ENCODE measurements at regions of chr3 and their contacts with region 1.

Region 1: DNA sequence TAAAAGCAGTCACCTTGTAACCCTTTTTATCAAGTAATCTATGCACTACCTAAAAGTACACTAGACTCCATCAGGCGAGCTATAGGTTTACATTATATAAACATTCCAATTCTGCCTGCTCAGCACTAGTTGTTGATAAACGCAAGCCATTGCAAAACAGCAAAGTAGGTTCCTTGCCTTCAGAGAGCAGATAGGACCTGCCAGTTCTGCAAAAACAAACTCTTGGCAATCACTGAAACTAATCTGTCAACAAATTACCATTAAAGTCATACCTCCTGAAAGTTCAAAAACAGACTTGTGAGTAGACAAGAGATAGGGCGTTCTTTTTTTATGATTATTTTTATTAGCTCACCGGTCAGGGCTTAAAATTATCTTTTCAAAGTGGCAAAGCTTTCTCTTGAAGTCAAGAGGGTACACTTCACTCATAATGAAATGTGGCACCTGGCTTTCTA is 392.5 kb downstream of the FOXP1 start:
- DNase-seq: no peak
- ATAC-seq: no peak
- H3K4me3 ChIP-seq: no peak overlapping the region
- H3K4me3 Mint-ChIP-seq: no peak overlapping the region
- H3K27ac ChIP-seq: no peak overlapping the region
- H3K27ac Mint-ChIP-seq: peak overlapping the region; percentile 25 to 52
- H3K4me1 ChIP-seq: no peaks in the 10 kb centered on the region
- H3K4me1 Mint-ChIP-seq: peaks cover 69 to 86% (median 70%) of the 10 kb centered on the region in 3 donors
- H3K27me3 ChIP-seq: no peaks in the 10 kb centered on the region
- H3K27me3 Mint-ChIP-seq: no peaks in the 10 kb centered on the region

Region 2: GRCh38 chr3:71083726-71084131 is 107.3 kb before region 1 on chr3:
- CTCF ChIA-PET with region 1: no interaction called
- POLR2A ChIA-PET with region 1: no interaction called
- DNase-seq: peak in 2 of 35 experiments; percentile 5 to 52
- ATAC-seq: no peak
- H3K4me3 ChIP-seq: no peak overlapping the region
- H3K4me3 Mint-ChIP-seq: peak overlapping the region in 1 of 3 donors; percentile 6
- H3K27ac ChIP-seq: peak overlapping the region; percentile 30
- H3K27ac Mint-ChIP-seq: peak overlapping the region; percentile 79 to 90
- H3K4me1 ChIP-seq: peaks cover 50 to 57% of the 10 kb centered on the region in 2 experiments
- H3K4me1 Mint-ChIP-seq: peaks cover 87 to 93% (median 89%) of the 10 kb centered on the region in 3 donors
- H3K27me3 ChIP-seq: no peaks in the 10 kb centered on the region
- H3K27me3 Mint-ChIP-seq: no peaks in the 10 kb centered on the region

Region 3: DNA sequence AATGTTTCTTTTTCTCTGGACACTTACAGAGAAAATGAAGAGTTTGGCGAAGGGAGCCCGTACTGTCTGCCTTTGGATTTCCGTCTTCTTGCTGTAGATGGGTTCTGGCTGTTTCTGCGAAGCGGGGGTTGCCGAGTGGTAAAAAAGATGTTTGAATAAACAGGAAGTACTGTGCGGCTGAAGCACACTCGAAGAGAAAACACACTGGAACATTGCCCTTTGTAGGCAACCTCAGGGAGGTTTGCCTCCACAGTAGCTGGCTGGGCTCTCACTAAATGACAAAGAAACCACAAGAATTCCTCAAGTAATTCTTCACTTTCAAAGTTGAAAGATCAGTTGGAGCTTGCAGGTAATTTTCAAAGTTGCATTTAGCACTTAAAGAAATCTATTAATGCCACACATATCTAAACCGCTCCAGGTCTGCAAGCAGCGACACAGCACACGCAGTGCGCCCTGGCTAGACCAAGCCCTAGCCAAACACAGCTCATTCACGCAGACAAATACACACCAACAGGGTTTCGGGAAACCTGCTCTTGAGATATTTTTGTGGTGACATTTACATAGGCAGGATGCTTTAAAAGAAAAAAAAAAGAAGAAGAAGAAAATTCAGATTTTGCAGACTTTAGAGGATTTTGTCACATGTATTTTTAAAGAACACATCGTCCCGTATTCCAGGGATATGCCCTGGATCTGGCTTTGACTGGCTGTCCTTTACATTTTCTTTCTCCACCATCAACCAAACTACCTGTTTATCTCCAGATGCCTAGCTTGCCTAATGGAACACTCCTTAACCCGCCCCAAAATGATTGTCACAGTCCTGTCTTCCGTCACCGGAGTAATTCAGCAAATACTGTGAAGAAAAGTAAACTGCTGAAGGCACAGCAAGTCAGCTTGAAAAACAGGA is 60.3 kb before region 1 on chr3:
- CTCF ChIA-PET with region 1: no interaction called
- POLR2A ChIA-PET with region 1: interaction called in 1 of 2 experiments, 18 read pairs
- DNase-seq: peak; percentile 42 to 89 (median 79)
- ATAC-seq: peak; percentile 82 to 89 (median 85)
- H3K4me3 ChIP-seq: peak overlapping the region; percentile 56 to 73
- H3K4me3 Mint-ChIP-seq: peak overlapping the region; percentile 83 to 91 (median 91)
- H3K27ac ChIP-seq: peak overlapping the region; percentile 86
- H3K27ac Mint-ChIP-seq: peak overlapping the region; percentile 97 to 99
- H3K4me1 ChIP-seq: peaks cover 50 to 63% of the 10 kb centered on the region in 2 experiments
- H3K4me1 Mint-ChIP-seq: peaks cover 79 to 93% (median 80%) of the 10 kb centered on the region in 3 donors
- H3K27me3 ChIP-seq: no peaks in the 10 kb centered on the region
- H3K27me3 Mint-ChIP-seq: no peaks in the 10 kb centered on the region

Region 4: GRCh38 chr3:71168081-71168770 is 22.8 kb before region 1 on chr3:
- CTCF ChIA-PET with region 1: no interaction called
- POLR2A ChIA-PET with region 1: interaction called in 1 of 2 experiments, 10 read pairs
- DNase-seq: no peak
- ATAC-seq: no peak
- H3K4me3 ChIP-seq: no peak overlapping the region
- H3K4me3 Mint-ChIP-seq: no peak overlapping the region
- H3K27ac ChIP-seq: no peak overlapping the region
- H3K27ac Mint-ChIP-seq: peak overlapping the region in 1 of 2 donors; percentile 39
- H3K4me1 ChIP-seq: peaks cover 0 to 2% of the 10 kb centered on the region in 2 experiments
- H3K4me1 Mint-ChIP-seq: peaks cover 26 to 66% (median 58%) of the 10 kb centered on the region in 3 donors
- H3K27me3 ChIP-seq: no peaks in the 10 kb centered on the region
- H3K27me3 Mint-ChIP-seq: no peaks in the 10 kb centered on the region

Region 5: GRCh38 chr3:71176366-71176765 is 14.7 kb before region 1 on chr3:
- CTCF ChIA-PET with region 1: interaction called, 5 to 10 read pairs
- POLR2A ChIA-PET with region 1: interaction called, 5 read pairs
- DNase-seq: no peak
- ATAC-seq: no peak
- H3K4me3 ChIP-seq: no peak overlapping the region
- H3K4me3 Mint-ChIP-seq: no peak overlapping the region
- H3K27ac ChIP-seq: no peak overlapping the region
- H3K27ac Mint-ChIP-seq: no peak overlapping the region
- H3K4me1 ChIP-seq: peaks cover 2 to 3% of the 10 kb centered on the region in 2 experiments
- H3K4me1 Mint-ChIP-seq: peaks cover 29 to 43% (median 43%) of the 10 kb centered on the region in 3 donors
- H3K27me3 ChIP-seq: no peaks in the 10 kb centered on the region
- H3K27me3 Mint-ChIP-seq: no peaks in the 10 kb centered on the region

Region 6: DNA sequence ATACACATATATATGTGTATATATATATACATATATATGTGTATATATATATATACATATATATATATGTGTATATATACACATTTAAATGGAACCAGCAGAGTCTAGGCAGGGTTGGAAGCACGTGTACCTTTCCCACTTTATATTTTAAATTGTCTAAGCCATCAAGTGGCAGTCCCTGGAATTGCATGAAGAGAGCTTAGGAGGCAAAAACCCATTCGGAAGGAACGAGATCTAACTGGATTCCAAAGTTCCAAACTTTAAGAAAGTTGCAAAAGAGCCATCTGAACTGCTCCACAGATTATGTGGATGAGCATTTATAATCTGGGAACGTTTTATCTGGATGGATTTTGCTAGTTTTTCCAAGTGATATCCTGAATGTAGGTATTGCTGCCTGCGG is 206.0 kb after region 1 on chr3:
- CTCF ChIA-PET with region 1: interaction called in 1 of 2 experiments, 12 read pairs
- POLR2A ChIA-PET with region 1: no interaction called
- DNase-seq: peak in 2 of 35 experiments; percentile 17 to 50
- ATAC-seq: no peak
- H3K4me3 ChIP-seq: no peak overlapping the region
- H3K4me3 Mint-ChIP-seq: peak overlapping the region in 1 of 3 donors; percentile 65
- H3K27ac ChIP-seq: peak overlapping the region; percentile 58
- H3K27ac Mint-ChIP-seq: peak overlapping the region; percentile 88 to 93
- H3K4me1 ChIP-seq: peaks cover 34 to 43% of the 10 kb centered on the region in 2 experiments
- H3K4me1 Mint-ChIP-seq: peaks cover 82 to 87% (median 84%) of the 10 kb centered on the region in 3 donors
- H3K27me3 ChIP-seq: no peaks in the 10 kb centered on the region
- H3K27me3 Mint-ChIP-seq: no peaks in the 10 kb centered on the region

Measured in T-cell (primary cell).